ENCODE measurements at regions of chr12 and their contacts with region 1.

Region 1: DNA sequence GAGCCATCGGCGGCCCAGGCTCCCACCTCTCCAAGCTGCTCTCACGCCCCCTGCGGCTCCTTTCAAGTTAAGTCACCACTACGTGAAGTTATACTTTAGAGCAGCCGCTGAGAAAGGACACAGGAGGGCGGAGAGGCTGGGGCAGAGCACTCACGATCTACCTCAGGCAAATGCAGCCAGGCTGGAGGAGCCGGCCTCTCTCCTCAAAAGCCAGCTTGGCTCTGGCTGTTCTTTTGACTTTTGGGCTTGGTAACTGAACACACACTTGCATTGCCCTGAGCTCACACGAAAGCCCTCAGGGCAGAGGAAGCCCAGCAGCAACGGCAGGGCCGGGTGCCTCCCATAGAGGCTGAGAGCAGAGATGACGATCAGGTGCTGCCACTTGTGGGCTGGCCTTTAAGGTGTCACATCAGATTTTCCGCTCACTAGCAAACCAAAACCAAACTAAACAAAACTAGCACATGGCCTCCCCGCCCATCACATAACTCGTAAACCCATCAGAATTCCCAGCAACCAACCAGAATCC is 75.2 kb downstream of the PITPNM2 start:
- DNase-seq: peak; percentile 90
- H3K4me3 Mint-ChIP-seq: peak overlapping the region; percentile 67
- H3K27ac Mint-ChIP-seq: peak overlapping the region; percentile 93
- H3K4me1 Mint-ChIP-seq: peaks cover 44% of the 10 kb centered on the region
- H3K27me3 Mint-ChIP-seq: no peaks in the 10 kb centered on the region

Region 2: GRCh38 chr12:122895705-122896636 is 179.7 kb before region 1 on chr12 and contains the start of gene VPS37B:
- CTCF ChIA-PET with region 1: no interaction called
- intact Hi-C with region 1: loop called (anchors 1 kb)
- DNase-seq: peak; percentile 92
- H3K4me3 Mint-ChIP-seq: peak within 1 kb of the TSS; percentile 83
- H3K27ac Mint-ChIP-seq: peak within 1 kb of the TSS; percentile 83
- H3K4me1 Mint-ChIP-seq: peaks cover 86% of the 10 kb centered on the region
- H3K27me3 Mint-ChIP-seq: peaks cover 7% of the 10 kb centered on the region
- total RNA-seq, gene VPS37B: 15.6 TPM

Region 3: GRCh38 chr12:123024819-123025391 is 50.8 kb before region 1 on chr12:
- CTCF ChIA-PET with region 1: interaction called, 4 read pairs
- intact Hi-C with region 1: loop called (anchors 1 kb)
- DNase-seq: peak; percentile 67
- H3K4me3 Mint-ChIP-seq: no peak overlapping the region
- H3K27ac Mint-ChIP-seq: peak overlapping the region; percentile 47
- H3K4me1 Mint-ChIP-seq: peaks cover 46% of the 10 kb centered on the region
- H3K27me3 Mint-ChIP-seq: no peaks in the 10 kb centered on the region

Region 4: GRCh38 chr12:123115409-123116121 is 39.9 kb after region 1 on chr12:
- CTCF ChIA-PET with region 1: interaction called, 9 read pairs
- intact Hi-C with region 1: loop called (anchors 1 kb)
- DNase-seq: peak; percentile 66
- H3K4me3 Mint-ChIP-seq: peak overlapping the region; percentile 40
- H3K27ac Mint-ChIP-seq: peak overlapping the region; percentile 68
- H3K4me1 Mint-ChIP-seq: peaks cover 71% of the 10 kb centered on the region
- H3K27me3 Mint-ChIP-seq: no peaks in the 10 kb centered on the region

Region 5: GRCh38 chr12:123150744-123151456 is 75.2 kb after region 1 on chr12 and contains the start of gene PITPNM2:
- CTCF ChIA-PET with region 1: interaction called, 6 read pairs
- intact Hi-C with region 1: loop called (anchors 1 kb)
- DNase-seq: peak; percentile 63
- H3K4me3 Mint-ChIP-seq: peak within 1 kb of the TSS; percentile 77
- H3K27ac Mint-ChIP-seq: peak within 1 kb of the TSS; percentile 75
- H3K4me1 Mint-ChIP-seq: peaks cover 29% of the 10 kb centered on the region
- H3K27me3 Mint-ChIP-seq: no peaks in the 10 kb centered on the region
- total RNA-seq, gene PITPNM2: 15.4 TPM

Region 6: GRCh38 chr12:123580772-123581171 is 505.1 kb after region 1 on chr12:
- CTCF ChIA-PET with region 1: interaction called, 3 read pairs
- intact Hi-C with region 1: loop called (anchors 5 kb)
- DNase-seq: no peak
- H3K4me3 Mint-ChIP-seq: no peak overlapping the region
- H3K27ac Mint-ChIP-seq: no peak overlapping the region
- H3K4me1 Mint-ChIP-seq: peaks cover 22% of the 10 kb centered on the region
- H3K27me3 Mint-ChIP-seq: no peaks in the 10 kb centered on the region

Region 7: DNA sequence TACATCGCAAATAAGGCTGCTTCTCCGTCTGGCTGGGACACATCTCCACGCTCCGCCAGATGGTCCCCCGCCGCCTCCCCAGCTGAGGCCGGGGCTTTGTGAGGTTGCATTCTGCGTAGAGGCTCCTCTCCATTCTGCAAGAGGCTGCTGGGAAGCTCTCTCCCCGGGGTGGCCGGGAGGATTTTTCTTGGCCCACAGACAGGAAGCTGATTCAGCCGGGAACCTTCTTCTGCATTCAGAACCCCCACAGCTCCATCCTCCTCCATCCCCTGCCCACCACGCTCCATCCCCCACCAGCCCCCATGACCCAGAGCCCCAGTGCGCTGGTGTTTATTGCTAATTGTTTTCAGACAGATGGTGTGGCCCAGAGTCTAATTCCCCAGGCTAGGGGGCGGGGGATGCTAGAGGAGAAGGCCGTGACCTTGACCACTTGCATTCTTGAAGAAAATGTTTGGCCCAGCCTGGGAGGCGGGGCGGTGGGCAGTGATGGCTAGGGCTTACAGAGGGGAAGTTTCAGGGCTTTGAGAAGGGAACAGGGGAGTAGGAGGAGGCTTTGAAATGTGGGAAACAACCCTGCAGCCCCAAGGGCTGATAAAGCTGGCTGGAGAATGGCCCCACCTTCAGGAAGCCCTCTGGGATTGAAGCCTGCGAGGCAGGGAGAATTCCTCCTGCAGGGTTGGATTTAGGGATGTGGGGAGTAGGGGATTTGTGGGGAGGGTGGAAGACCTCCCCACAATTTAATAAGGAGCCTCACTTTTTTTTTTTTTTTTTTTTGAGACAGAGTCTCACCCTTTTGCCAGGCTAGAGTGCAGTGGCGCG is 1580.2 kb after region 1 on chr12:
- CTCF ChIA-PET with region 1: no interaction called
- intact Hi-C with region 1: no loop called
- DNase-seq: no peak
- H3K4me3 Mint-ChIP-seq: no peak overlapping the region
- H3K27ac Mint-ChIP-seq: no peak overlapping the region
- H3K4me1 Mint-ChIP-seq: peaks cover 3% of the 10 kb centered on the region
- H3K27me3 Mint-ChIP-seq: peaks cover 4% of the 10 kb centered on the region

Measured in activated naive CD4-positive, alpha-beta T cell treated with anti-CD3 and anti-CD28 coated beads for 36 hours (primary cell).